GM10248 (cell line): ENCODE measurements at regions of chr11 and their contacts with region 1.

Region 1: GRCh38 chr11:44095506-44096394 is at the start of gene EXT2:
- DNase-seq: peak; percentile 96
- CTCF ChIP-seq: peak; percentile 92

Region 2: GRCh38 chr11:44028401-44028800 is 67.3 kb before region 1 on chr11:
- CTCF ChIA-PET with region 1: no interaction called
- POLR2A ChIA-PET with region 1: no interaction called
- DNase-seq: no peak
- CTCF ChIP-seq: no peak

Region 3: GRCh38 chr11:44083906-44084305 is 11.8 kb before region 1 on chr11:
- CTCF ChIA-PET with region 1: interaction called, 53 read pairs
- POLR2A ChIA-PET with region 1: no interaction called
- DNase-seq: no peak
- CTCF ChIP-seq: no peak

Region 4: DNA sequence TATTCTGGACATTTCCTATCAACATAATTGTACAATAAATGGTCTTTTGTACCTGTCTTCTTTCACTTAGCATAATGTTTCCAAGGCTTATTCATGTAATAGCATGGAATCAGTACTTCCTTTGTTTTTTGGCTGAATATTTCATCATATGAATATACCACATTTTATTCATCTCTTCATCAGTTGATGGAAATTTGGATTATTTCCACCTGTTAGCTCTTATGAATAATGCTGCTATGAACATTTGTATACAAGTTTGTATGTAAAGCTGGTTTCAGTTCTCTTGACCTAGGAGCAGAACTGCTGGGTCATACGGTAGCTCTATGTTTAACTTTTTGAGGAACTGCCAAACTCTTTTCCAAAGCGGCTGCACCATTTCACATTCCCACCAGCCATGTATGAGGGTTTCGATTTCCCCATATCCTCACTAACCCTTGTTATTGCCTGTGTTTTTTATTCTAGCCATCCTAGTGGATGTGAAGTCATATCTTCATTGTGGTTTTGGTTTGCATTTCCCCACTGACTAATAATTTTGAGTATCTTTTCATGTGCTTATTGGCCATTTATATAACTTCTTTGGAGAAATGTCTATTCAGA is 20.6 kb after region 1 on chr11:
- CTCF ChIA-PET with region 1: interaction called, 48 read pairs
- POLR2A ChIA-PET with region 1: no interaction called
- DNase-seq: no peak
- CTCF ChIP-seq: no peak

Region 5: GRCh38 chr11:44372989-44373388 is 277.2 kb after region 1 on chr11:
- CTCF ChIA-PET with region 1: no interaction called
- POLR2A ChIA-PET with region 1: no interaction called
- DNase-seq: no peak
- CTCF ChIP-seq: no peak

Region 6: GRCh38 chr11:44538375-44539054 is 442.8 kb after region 1 on chr11:
- CTCF ChIA-PET with region 1: interaction called, 23 read pairs
- POLR2A ChIA-PET with region 1: no interaction called
- DNase-seq: peak; percentile 86
- CTCF ChIP-seq: peak; percentile 87